ENCODE measurements at regions of chr16 and their contacts with region 1.

Region 1: DNA sequence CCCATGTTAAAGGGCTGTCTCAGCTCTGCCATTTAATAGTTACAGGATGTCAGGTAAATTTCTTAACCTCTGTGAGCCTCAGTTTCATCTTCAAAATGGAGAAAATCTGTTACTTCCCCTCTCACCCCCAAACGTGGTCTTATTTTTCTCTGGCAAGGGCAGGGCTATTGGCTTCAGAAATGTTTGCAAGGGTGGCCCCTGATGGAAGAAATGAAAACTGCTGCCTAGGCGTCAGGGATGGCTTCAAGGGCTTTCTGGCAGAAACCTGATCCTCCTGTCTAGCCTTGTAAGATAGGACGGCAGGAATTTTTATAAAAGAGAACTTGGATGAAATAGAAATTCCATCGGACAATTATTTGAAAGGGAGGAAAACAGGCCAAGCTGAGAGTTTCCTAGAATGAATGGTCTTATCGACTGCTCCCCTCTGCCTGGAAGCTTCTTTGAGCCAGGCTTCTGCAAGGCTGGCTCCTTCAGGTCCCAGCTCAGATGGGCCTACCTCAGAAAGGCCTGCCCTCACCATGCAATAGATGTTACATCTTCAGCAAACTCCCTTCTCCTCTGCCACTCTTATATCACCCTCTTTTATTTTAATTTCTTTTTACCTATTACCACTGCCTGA is 43.0 kb upstream of the TANGO6 start:
- DNase-seq: peak; percentile 40
- H3K4me3 ChIP-seq: no peak overlapping the region
- CTCF ChIP-seq: peak; percentile 77

Region 2: GRCh38 chr16:68528686-68529379 is 271.5 kb before region 1 on chr16:
- CTCF ChIA-PET with region 1: interaction called, 29 read pairs
- POLR2A ChIA-PET with region 1: no interaction called
- DNase-seq: no peak
- H3K4me3 ChIP-seq: peak overlapping the region; percentile 32
- CTCF ChIP-seq: peak; percentile 97

Region 3: DNA sequence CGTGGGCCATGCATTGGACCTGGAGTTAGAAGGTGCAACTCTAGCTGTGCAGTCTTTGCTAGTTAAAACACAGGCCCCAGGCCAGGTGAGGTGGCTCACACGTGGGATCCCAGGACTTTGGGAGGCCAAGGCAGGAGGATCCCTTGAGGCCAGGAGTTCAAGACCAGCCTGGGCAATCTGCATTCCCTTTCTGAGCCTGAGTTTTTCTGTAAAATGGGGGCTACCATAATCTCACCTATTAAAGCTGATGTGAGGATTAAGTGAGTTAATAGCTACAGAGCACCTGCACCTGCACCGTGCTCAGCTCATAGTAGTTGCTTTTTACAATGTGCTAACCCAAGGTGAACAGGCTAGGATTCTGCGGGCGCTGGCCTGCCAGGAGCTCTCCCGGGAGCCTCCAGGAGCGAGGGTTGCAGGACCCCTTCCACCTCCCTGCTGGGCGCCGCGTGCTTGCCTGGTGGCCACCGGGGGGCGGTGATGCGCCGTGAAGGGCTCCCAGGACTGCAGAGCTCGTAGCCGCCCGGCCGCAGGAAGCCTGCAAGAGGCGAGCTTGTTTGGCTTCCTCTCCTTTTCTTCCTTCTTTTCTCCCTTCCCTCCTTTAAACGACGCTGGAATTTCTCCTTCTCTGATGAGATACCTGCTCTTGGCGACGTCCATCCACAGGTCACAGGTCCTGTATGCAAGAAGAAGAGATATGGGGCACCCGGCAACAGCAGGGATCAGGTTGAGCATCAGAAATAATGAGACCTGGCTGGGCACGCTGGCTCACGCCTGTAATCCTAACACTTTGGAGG is 210.0 kb before region 1 on chr16:
- CTCF ChIA-PET with region 1: interaction called, 20 read pairs
- POLR2A ChIA-PET with region 1: no interaction called
- DNase-seq: no peak
- H3K4me3 ChIP-seq: no peak overlapping the region; the same call in 1 of the 2 replicates
- CTCF ChIP-seq: peak; percentile 93

Region 4: GRCh38 chr16:68704232-68704867 is 96.0 kb before region 1 on chr16:
- CTCF ChIA-PET with region 1: interaction called, 15 read pairs
- POLR2A ChIA-PET with region 1: no interaction called
- DNase-seq: no peak
- H3K4me3 ChIP-seq: no peak overlapping the region
- CTCF ChIP-seq: peak; percentile 90

Region 5: GRCh38 chr16:68749432-68749831 is 50.9 kb before region 1 on chr16:
- CTCF ChIA-PET with region 1: no interaction called
- POLR2A ChIA-PET with region 1: no interaction called
- DNase-seq: no peak
- H3K4me3 ChIP-seq: no peak overlapping the region
- CTCF ChIP-seq: no peak

Region 6: DNA sequence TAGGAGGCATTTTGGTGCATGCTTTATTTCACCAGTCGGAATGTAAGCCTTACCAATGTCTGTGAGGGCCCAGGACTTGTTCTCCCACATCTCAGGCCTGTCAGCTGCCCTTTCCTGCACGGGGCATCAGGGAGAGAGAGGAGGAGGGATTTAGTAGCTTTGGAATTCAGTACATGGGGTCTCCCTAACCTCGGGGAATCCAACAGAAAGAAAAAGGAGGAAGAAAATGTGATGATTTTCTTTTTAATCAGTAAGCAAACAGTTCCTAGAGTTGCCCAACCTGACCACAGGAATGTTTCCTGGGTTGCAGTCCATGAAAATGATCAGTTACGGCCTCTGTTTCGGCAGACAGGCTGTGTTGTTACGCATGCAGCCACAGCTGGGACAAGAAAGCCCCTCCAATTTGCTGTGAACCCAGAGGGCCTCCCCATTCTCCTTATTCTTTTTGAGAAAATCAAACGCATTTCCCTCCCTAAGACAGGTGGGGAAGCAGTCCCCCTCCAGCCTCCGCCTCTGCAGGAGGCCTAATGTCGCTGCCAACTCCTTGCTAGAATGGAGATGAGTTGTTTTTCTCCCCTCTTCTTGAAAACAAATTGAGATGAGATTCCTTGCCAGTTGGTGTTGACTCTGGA is 10.1 kb before region 1 on chr16:
- CTCF ChIA-PET with region 1: interaction called, 16 read pairs
- POLR2A ChIA-PET with region 1: no interaction called
- DNase-seq: peak; percentile 50
- H3K4me3 ChIP-seq: no peak overlapping the region
- CTCF ChIP-seq: no peak

Region 7: GRCh38 chr16:68811503-68811902 is 11.1 kb after region 1 on chr16:
- CTCF ChIA-PET with region 1: interaction called, 16 read pairs
- POLR2A ChIA-PET with region 1: no interaction called
- DNase-seq: no peak
- H3K4me3 ChIP-seq: no peak overlapping the region
- CTCF ChIP-seq: no peak

Region 8: GRCh38 chr16:68823401-68824135 is 23.2 kb after region 1 on chr16:
- CTCF ChIA-PET with region 1: interaction called, 18 read pairs
- POLR2A ChIA-PET with region 1: no interaction called
- DNase-seq: peak; percentile 83
- H3K4me3 ChIP-seq: no peak overlapping the region; the same call in 1 of the 2 replicates
- CTCF ChIP-seq: no peak

Region 9: GRCh38 chr16:68859827-68860226 is 59.5 kb after region 1 on chr16:
- CTCF ChIA-PET with region 1: no interaction called
- POLR2A ChIA-PET with region 1: no interaction called
- DNase-seq: no peak
- H3K4me3 ChIP-seq: no peak overlapping the region
- CTCF ChIP-seq: no peak

Region 10: DNA sequence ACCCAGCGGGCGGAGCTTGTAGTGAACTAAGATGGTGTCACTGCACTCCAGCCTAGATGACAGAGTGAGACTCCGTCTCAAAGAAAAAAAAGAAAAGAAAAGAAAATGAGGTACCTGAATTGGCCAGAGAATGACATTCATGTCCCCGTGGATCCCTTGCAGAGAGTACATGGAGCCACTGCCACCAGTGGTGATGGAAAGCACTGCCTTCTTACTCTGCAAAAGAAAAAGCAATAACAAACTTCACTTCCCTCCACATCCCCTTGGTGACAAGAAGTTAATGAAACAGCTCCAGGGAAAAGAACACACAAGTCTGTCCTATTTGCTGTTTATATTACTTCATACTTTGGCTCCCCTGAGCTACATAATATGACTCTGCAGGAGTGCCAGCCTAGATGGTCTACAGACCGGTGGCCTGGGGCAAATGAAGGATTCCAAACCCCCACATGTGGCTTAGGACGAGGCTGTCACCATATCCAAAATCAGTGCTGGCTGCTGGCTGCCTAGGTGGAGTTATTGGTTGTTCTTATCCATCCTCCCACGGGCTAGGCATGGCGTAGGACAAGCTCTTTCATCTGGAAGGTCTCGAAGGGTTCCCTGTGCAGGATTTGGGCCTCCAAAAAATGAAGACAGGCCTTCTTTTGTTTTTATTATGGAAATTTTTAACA is 912.7 kb after region 1 on chr16:
- CTCF ChIA-PET with region 1: no interaction called
- POLR2A ChIA-PET with region 1: no interaction called
- DNase-seq: no peak
- H3K4me3 ChIP-seq: no peak overlapping the region
- CTCF ChIP-seq: no peak

Measured in AG04449 (cell line).